GM12878 (cell line): ENCODE measurements at regions of chr13 and their contacts with region 1.

Region 1: DNA sequence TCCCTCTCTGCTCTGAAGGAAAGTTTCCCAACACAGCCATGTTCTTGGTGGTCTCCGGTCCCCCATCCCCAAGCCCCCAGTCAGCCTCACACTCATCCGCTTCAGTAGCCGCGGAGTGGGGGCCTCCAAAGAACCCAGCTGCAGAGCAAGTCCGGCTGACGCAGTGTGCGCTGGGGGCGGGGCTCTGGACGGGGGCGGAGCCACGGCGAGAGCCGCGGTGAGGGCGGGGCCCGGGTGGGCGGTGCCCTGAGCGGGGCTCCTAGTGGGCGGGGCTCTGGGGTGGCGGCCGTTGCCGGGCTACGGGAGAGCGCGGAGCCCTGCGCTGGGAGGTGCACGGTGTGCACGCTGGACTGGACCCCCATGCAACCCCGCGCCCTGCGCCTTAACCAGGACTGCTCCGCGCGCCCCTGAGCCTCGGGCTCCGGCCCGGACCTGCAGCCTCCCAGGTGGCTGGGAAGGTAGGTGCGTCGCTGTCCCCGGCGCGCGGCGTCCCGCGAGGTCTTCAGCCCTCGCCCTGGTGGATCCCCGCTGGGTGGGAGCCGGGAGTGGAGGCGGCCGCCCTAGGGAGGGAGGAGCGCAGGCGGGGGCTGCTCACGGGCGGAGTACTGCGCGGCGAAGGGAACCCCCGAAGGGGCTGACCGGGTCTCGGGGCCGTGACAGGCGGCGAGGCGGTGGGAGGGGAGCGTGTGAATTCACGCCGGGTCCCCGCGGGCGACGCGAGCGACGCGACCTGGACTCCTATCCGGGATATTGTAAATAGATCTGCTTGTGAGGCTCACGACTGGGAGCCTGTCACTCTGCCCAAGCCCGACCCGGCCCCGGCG is 9.1 kb downstream of the TNFRSF19 start:
- DNase-seq: no peak
- ATAC-seq: peak; percentile 89
- H3K4me3 ChIP-seq: peak overlapping the region; percentile 86
- H3K27ac ChIP-seq: peak overlapping the region; percentile 92
- H3K4me1 ChIP-seq: peaks cover 17% of the 10 kb centered on the region
- H3K27me3 ChIP-seq: no peaks in the 10 kb centered on the region
- CTCF ChIP-seq: no peak
- EP300 ChIP-seq: no peak
- POLR2A ChIP-seq: peak; percentile 83
- RAD21 ChIP-seq: no peak

Region 2: DNA sequence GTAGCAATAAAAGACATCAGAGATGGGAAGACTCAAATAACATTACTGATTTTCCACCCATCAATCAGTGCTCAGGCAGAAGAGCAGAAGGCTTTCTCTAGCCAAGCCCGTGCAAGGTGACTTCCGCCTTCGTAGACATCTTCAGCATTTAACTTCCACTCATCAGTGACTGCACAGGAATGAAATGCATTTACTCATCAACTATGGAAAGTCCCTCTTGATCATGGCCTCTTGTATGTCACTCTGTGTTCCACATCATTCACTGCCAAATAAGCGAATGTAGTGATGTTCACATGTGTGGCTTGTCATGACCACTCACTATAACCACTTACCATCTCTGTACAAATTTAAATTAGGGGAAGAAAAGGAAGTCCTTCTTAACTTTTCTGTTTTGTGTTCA is 195.2 kb before region 1 on chr13:
- CTCF ChIA-PET with region 1: no interaction called
- POLR2A ChIA-PET with region 1: no interaction called
- RAD21 ChIA-PET with region 1: no interaction called
- SMC1A ChIA-PET with region 1: no interaction called
- in situ Hi-C with region 1: no loop called
- intact Hi-C with region 1: loop called (anchors 10 kb)
- DNase-seq: peak; percentile 82
- ATAC-seq: peak; percentile 97
- H3K4me3 ChIP-seq: no peak overlapping the region
- H3K27ac ChIP-seq: peak overlapping the region; percentile 30
- H3K4me1 ChIP-seq: peaks cover 23% of the 10 kb centered on the region
- H3K27me3 ChIP-seq: no peaks in the 10 kb centered on the region
- CTCF ChIP-seq: no peak
- EP300 ChIP-seq: 0 out of 4 replicates have a peak, but pooled peaks of 1 of the 2 experiments have one; percentile 20
- POLR2A ChIP-seq: no peak
- RAD21 ChIP-seq: no peak

Region 3: DNA sequence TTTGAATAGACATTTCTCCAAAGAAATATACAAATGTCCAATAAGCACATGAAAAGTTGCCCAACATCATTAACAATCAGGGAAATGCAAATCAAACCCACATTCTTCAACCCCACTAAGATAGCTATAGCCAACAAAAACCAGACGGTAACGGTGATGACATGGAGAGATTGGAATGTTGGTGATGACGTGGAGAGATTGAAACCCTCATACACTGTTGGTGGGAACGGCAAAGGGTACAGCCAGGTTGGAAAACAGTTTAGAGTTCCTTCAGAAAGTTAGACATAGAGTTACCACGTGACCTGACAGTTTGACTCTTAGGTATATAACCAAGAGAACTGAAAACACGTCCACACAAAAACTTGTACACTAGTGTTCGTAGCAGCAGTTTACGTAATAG is 39.1 kb after region 1 on chr13:
- CTCF ChIA-PET with region 1: no interaction called
- POLR2A ChIA-PET with region 1: no interaction called
- RAD21 ChIA-PET with region 1: no interaction called
- SMC1A ChIA-PET with region 1: no interaction called
- in situ Hi-C with region 1: no loop called
- intact Hi-C with region 1: loop called (anchors 5 kb)
- DNase-seq: no peak
- ATAC-seq: no peak
- H3K4me3 ChIP-seq: no peak overlapping the region
- H3K27ac ChIP-seq: no peak overlapping the region
- H3K4me1 ChIP-seq: 0 out of 2 replicates have a peak, but pooled peaks cover 2% of the 10 kb centered on the region
- H3K27me3 ChIP-seq: no peaks in the 10 kb centered on the region
- CTCF ChIP-seq: no peak
- EP300 ChIP-seq: no peak
- POLR2A ChIP-seq: no peak
- RAD21 ChIP-seq: no peak

Region 4: GRCh38 chr13:23771552-23771951 is 192.3 kb after region 1 on chr13:
- CTCF ChIA-PET with region 1: no interaction called
- POLR2A ChIA-PET with region 1: no interaction called
- RAD21 ChIA-PET with region 1: no interaction called
- SMC1A ChIA-PET with region 1: interaction called, 3 read pairs
- in situ Hi-C with region 1: no loop called
- intact Hi-C with region 1: loop called (anchors 10 kb)
- DNase-seq: peak; percentile 76
- ATAC-seq: peak; percentile 96
- H3K4me3 ChIP-seq: no peak overlapping the region
- H3K27ac ChIP-seq: peak overlapping the region; percentile 80
- H3K4me1 ChIP-seq: peaks cover 51% of the 10 kb centered on the region
- H3K27me3 ChIP-seq: no peaks in the 10 kb centered on the region
- CTCF ChIP-seq: no peak
- EP300 ChIP-seq: peak; percentile 55 to 88
- POLR2A ChIP-seq: no peak
- RAD21 ChIP-seq: no peak

Region 5: GRCh38 chr13:23888658-23889614 is 309.7 kb after region 1 on chr13 and contains the start of gene MIPEP:
- CTCF ChIA-PET with region 1: interaction called, 4 read pairs
- POLR2A ChIA-PET with region 1: no interaction called
- RAD21 ChIA-PET with region 1: interaction called, 4 read pairs
- SMC1A ChIA-PET with region 1: no interaction called
- in situ Hi-C with region 1: no loop called
- intact Hi-C with region 1: loop called (anchors 5 kb)
- DNase-seq: peak; percentile 79
- ATAC-seq: peak; percentile 96
- H3K4me3 ChIP-seq: peak within 1 kb of the TSS; percentile 70
- H3K27ac ChIP-seq: peak within 1 kb of the TSS; percentile 69
- H3K4me1 ChIP-seq: no peaks in the 10 kb centered on the region
- H3K27me3 ChIP-seq: no peaks in the 10 kb centered on the region
- CTCF ChIP-seq: peak; percentile 83 to 91 (median 87)
- EP300 ChIP-seq: peak in 1 of 2 experiments; percentile 15; a peak in 1 of 4 replicates
- POLR2A ChIP-seq: peak; percentile 79
- RAD21 ChIP-seq: no peak
- polyA plus RNA-seq, gene MIPEP: 15.6 to 28.2 TPM